H1 (cell line): ENCODE measurements at regions of chr10 and their contacts with region 1.

Region 1: DNA sequence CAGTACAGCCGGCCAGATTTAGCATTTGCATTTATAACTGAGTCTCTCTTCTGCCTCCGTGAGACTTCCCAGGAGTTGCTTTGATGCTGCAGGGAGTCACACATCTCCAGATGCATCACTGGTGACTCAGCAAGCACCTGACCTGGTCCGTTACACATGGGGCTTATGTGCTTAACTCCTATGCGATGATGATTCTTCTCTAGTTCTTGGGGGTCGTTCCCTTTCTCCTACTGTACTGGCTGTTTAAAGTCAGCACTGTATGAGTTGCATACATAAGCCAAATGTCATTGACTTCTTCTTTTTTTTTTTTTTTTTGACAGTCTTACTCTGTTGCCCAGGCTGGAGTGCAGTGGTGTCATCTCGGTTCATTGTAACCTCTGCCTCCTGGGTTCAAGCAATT is 13.0 kb upstream of the AKR1E2 start:
- DNase-seq: no peak
- H3K4me3 ChIP-seq: no peak overlapping the region
- H3K27ac ChIP-seq: no peak overlapping the region
- H3K4me1 ChIP-seq: no peaks in the 10 kb centered on the region
- H3K27me3 ChIP-seq: no peaks in the 10 kb centered on the region
- CTCF ChIP-seq: no peak
- EP300 ChIP-seq: no peak
- POLR2A ChIP-seq: no peak
- RAD21 ChIP-seq: no peak

Region 2: GRCh38 chr10:4825851-4826665 is 13.0 kb after region 1 on chr10 and contains the start of gene AKR1E2:
- CTCF ChIA-PET with region 1: interaction called, 22 read pairs
- POLR2A ChIA-PET with region 1: no interaction called
- DNase-seq: peak; percentile 46 to 81
- H3K4me3 ChIP-seq: peak within 1 kb of the TSS; percentile 24 to 56 (median 40); a peak in 7 of 8 replicates
- H3K27ac ChIP-seq: no peak within 1 kb of the TSS
- H3K4me1 ChIP-seq: no peaks in the 10 kb centered on the region; a peak in 2 of 7 replicates
- H3K27me3 ChIP-seq: peaks cover 4 to 19% (median 8%) of the 10 kb centered on the region in 4 experiments
- CTCF ChIP-seq: no peak
- EP300 ChIP-seq: no peak
- POLR2A ChIP-seq: peak in 1 of 2 experiments; percentile 27; a peak in 1 of 3 replicates
- RAD21 ChIP-seq: no peak
- total RNA-seq, gene AKR1E2: 3.5 TPM in 2 replicates

Region 3: DNA sequence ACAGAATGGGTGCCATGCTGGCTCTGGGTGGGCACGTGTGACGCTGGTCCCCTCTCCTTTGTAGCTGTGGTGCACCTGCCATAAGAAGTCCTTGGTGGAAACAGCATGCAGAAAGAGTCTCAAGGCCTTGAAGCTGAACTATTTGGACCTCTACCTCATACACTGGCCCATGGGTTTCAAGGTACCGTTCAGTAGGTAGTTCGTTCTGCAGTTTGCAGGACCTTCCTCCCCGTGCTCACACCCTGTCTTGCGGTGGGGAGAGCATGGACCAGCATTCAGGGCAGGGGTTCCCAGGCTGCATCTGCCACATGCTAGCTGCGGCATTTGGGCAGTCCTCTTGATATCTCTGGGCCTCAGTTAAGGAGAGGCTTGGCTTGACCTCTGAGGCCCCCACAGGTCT is 20.3 kb after region 1 on chr10:
- CTCF ChIA-PET with region 1: interaction called, 22 read pairs
- POLR2A ChIA-PET with region 1: no interaction called
- DNase-seq: no peak
- H3K4me3 ChIP-seq: no peak overlapping the region
- H3K27ac ChIP-seq: no peak overlapping the region
- H3K4me1 ChIP-seq: no peaks in the 10 kb centered on the region
- H3K27me3 ChIP-seq: no peaks in the 10 kb centered on the region; a peak in 1 of 7 replicates
- CTCF ChIP-seq: no peak
- EP300 ChIP-seq: no peak
- POLR2A ChIP-seq: no peak
- RAD21 ChIP-seq: no peak

Region 4: GRCh38 chr10:4839401-4839800 is 26.4 kb after region 1 on chr10:
- CTCF ChIA-PET with region 1: interaction called, 11 read pairs
- POLR2A ChIA-PET with region 1: no interaction called
- DNase-seq: no peak
- H3K4me3 ChIP-seq: no peak overlapping the region
- H3K27ac ChIP-seq: no peak overlapping the region
- H3K4me1 ChIP-seq: no peaks in the 10 kb centered on the region
- H3K27me3 ChIP-seq: no peaks in the 10 kb centered on the region
- CTCF ChIP-seq: no peak
- EP300 ChIP-seq: no peak
- POLR2A ChIP-seq: no peak
- RAD21 ChIP-seq: no peak